ENCODE measurements at regions of chr15 and their contacts with region 1.

Region 1: DNA sequence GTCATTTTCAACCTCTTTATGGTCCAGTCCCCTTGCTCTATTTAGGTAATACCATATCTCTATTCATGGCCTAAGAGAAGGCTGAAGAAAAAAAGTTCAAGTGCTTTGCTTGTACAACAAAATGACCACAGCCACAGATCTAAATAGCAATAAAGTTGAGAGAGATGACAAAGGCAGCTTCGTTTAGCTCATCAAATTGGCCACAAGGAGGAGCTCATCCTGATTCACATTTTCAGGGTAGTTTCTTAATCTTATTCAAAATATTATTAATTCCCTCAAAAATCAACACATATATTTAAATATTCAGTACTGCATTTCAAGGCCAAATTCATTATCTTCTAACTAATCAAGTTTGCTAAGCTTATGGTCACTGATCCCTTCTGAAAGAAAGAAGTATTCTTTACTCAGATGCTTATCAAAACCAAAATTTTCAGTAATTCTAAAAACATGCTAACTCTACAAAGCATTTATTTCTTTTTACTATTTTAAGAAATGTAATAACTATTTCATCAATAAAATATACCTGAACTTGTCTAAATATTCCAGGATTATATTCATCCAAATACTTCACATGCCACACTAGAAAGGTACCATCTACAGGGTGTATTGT is 85.5 kb downstream of the DMXL2 start:
- DNase-seq: peak; percentile 40 to 46
- ATAC-seq: peak; percentile 64 to 74; a peak in 4 of 6 replicates
- H3K4me3 ChIP-seq: no peak overlapping the region
- H3K27ac ChIP-seq: no peak overlapping the region
- H3K4me1 ChIP-seq: no peaks in the 10 kb centered on the region
- CTCF ChIP-seq: peak; percentile 74
- EP300 ChIP-seq: no peak
- POLR2A ChIP-seq: no peak
- RAD21 ChIP-seq: peak; percentile 47 to 52; a peak in 4 of 5 replicates

Region 2: DNA sequence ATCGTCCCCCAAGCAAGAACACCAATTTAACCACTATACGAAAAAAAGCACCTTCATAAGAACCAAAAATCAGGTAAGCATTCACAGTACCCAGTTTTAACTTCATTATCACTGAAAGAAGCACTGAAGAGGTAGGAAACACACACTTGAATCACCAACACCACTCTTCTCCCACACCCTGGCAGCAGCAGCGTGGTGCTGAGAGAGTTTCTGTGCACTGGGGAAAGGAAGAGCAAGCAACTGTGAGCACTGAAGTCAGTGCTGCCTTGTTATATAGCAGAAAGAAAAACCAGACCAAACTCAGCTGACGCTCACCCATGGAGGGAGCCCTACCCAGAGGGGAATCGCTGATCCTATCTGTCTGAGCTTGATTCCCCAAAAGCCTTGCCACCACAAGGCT is 12.7 kb before region 1 on chr15:
- CTCF ChIA-PET with region 1: interaction called, 12 read pairs
- POLR2A ChIA-PET with region 1: no interaction called
- DNase-seq: no peak
- ATAC-seq: no peak
- H3K4me3 ChIP-seq: no peak overlapping the region
- H3K27ac ChIP-seq: no peak overlapping the region
- H3K4me1 ChIP-seq: no peaks in the 10 kb centered on the region
- CTCF ChIP-seq: no peak
- EP300 ChIP-seq: no peak
- POLR2A ChIP-seq: no peak
- RAD21 ChIP-seq: no peak

Region 3: GRCh38 chr15:51622604-51623370 is 85.7 kb after region 1 on chr15 and contains the start of gene DMXL2:
- CTCF ChIA-PET with region 1: interaction called, 29 read pairs
- POLR2A ChIA-PET with region 1: interaction called, 5 read pairs
- DNase-seq: peak; percentile 95
- ATAC-seq: peak; percentile 86 to 88
- H3K4me3 ChIP-seq: peak within 1 kb of the TSS; percentile 91
- H3K27ac ChIP-seq: peak within 1 kb of the TSS; percentile 86 to 91
- H3K4me1 ChIP-seq: peaks cover 39% of the 10 kb centered on the region
- CTCF ChIP-seq: no peak
- EP300 ChIP-seq: no peak
- POLR2A ChIP-seq: peak; percentile 69
- RAD21 ChIP-seq: no peak
- polyA plus RNA-seq, gene DMXL2: 50.9 and 58.7 TPM in 2 replicates

Measured in A549 (cell line).